HEK293 (cell line): ENCODE measurements at regions of chr15 and their contacts with region 1.

Region 1: DNA sequence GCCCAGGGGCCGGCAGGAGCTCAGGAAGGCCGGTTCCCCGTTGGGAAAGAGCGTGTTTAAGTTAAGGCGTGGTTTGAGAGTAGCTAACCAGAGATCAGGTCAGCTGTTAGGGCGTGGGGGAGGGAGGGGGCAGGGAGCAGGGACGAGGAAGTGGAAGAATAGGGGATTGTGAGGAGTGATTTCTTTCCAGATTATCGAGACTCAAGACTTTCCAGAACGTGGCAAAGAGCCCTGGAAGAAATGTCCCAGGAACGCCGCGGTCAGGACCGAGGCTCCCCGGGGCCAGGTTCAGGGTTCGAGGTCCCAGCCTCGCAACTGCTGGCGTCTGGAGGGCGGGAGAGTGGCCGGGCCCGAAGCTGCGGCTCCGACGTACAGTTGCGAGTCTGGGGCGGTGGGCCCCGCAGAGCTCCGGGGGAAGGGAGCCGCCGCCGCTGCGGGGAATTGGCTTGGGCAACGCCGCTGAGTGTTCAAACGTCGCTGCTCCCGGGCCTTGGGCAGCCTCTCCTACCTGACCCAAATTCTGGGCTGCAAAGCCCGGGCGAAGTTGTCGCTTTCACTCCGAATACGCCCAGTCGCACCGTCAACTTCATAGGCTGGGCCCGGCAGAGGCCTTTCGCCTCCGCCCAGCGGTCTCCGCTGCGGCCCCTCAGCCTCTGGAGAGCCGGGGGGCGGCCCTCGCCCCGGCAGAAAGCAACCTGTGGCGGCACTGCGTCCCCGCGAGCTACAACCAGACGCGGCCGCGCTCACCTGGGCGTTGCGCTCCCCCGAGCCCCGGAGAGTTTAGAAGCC is 9.5 kb downstream of the ISL2 start:
- H3K4me3 ChIP-seq: peak overlapping the region; percentile 59
- H3K27ac ChIP-seq: peak overlapping the region; percentile 86
- H3K4me1 ChIP-seq: peaks cover 39% of the 10 kb centered on the region
- CTCF ChIP-seq: peak; percentile 33; the same call in 1 of the 2 replicates

Region 2: DNA sequence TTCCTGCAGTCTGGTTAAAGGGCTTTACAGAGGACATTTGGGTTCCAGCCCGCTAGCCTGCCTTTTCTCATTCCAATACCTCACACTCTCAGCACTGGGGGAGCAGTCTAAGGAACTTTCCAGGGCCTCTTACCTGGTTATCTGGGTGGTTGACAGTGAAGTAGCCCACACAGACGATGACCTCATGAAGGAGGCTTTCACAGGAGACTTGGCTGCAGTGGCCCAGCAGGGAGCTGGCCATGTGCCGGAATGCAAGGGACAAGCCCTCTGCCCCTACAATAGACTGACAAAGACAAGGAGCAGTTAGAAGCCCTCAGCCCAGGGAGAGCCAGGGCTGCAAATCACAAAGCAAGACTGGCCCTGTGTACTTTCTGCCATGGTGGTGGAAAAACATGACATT is 30.0 kb after region 1 on chr15:
- CTCF ChIA-PET with region 1: interaction called, 3 read pairs
- POLR2A ChIA-PET with region 1: interaction called, 13 read pairs
- H3K4me3 ChIP-seq: no peak overlapping the region
- H3K27ac ChIP-seq: no peak overlapping the region
- H3K4me1 ChIP-seq: peaks cover 4% of the 10 kb centered on the region; the same call in 1 of the 2 replicates
- CTCF ChIP-seq: no peak